ENCODE measurements at regions of chr11 and their contacts with region 1.

Region 1: GRCh38 chr11:118401151-118401878 is at the start of gene ATP5MG:
- DNase-seq: peak; percentile 92 to 95
- ATAC-seq: peak; percentile 86 to 94 (median 91)
- H3K4me3 ChIP-seq: peak within 1 kb of the TSS; percentile 61 to 97 (median 88)
- H3K27ac ChIP-seq: peak within 1 kb of the TSS; percentile 88 to 97 (median 94)
- H3K4me1 ChIP-seq: peaks cover 3 to 53% (median 46%) of the 10 kb centered on the region in 9 donors
- H3K27me3 ChIP-seq: no peaks in the 10 kb centered on the region
- CTCF ChIP-seq: peak in 3 of 9 donors; percentile 18 to 42 (median 37)
- total RNA-seq, gene ATP5MG: 482 to 777 (median 688) TPM

Region 2: GRCh38 chr11:118435893-118436624 is 34.7 kb after region 1 on chr11 and contains the start of gene KMT2A:
- intact Hi-C with region 1: loop called in 7 of 10 experiments (anchors 2 to 5 kb)
- DNase-seq: peak; percentile 99
- ATAC-seq: peak; percentile 90 to 95 (median 94)
- H3K4me3 ChIP-seq: peak within 1 kb of the TSS; percentile 84 to 100 (median 98)
- H3K27ac ChIP-seq: peak within 1 kb of the TSS; percentile 78 to 95 (median 93)
- H3K4me1 ChIP-seq: peaks cover 4 to 54% (median 42%) of the 10 kb centered on the region in 9 donors
- H3K27me3 ChIP-seq: no peaks in the 10 kb centered on the region
- CTCF ChIP-seq: peak in 1 of 9 donors; percentile 34
- total RNA-seq, gene KMT2A: 16.3 to 44.5 (median 38.9) TPM

Measured in heart right ventricle (tissue), 16 donors.